Right lobe of liver (tissue), 6 donors: ENCODE measurements at regions of chr9 and their contacts with region 1.

Region 1: DNA sequence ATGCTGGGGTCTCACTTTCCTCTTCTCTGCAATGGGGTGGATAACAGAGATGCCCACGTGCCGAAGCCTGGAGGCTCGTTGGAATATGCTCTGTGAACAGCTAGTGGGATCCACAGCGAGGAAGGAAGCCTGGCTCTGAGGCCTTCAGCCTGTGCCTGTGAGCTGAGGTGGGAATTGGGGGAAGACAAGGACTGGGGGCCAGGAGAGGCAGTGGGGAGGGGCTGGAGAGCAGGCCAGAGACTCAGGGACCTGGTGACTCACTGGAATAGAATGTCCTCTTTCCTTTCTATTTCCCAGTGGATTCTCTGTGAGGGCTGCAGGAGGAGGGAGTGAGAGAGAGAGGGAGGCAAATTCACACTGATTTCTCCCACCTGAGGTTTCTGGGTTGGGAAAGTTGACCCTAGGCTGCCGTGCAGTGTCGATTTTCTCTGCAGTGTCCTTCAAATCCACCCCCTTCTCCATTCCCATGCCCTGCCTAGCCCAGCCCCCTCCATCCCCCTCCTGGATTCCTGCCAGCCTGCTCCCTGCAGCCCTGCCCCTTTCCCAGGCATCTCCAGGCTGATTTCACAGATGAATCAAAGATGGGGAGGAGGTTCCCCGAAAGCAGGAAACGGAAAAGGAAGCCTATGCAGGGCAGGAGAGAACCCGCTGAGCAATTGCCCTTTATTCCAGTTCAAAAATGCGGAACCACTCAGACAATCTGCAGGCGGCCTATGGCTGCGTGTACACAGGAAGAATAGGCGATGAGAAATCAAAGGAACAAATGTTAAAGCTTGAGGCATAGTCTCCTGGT is 1.4 kb upstream of the SPAAR start:
- DNase-seq: peak in 1 of 3 donors; percentile 63
- ATAC-seq: peak; percentile 12 to 63 (median 35)
- H3K4me3 ChIP-seq: no peak overlapping the region
- H3K27ac ChIP-seq: peak overlapping the region; percentile 53 to 69 (median 62)
- H3K4me1 ChIP-seq: peaks cover 0 to 55% (median 18%) of the 10 kb centered on the region in 4 donors
- H3K27me3 ChIP-seq: no peaks in the 10 kb centered on the region
- CTCF ChIP-seq: no peak
- POLR2A ChIP-seq: no peak

Region 2: GRCh38 chr9:35664531-35665470 is 243.1 kb before region 1 on chr9 and contains the start of gene ARHGEF39:
- intact Hi-C with region 1: no loop called
- DNase-seq: peak; percentile 85 to 87 (median 85)
- ATAC-seq: peak; percentile 82 to 88 (median 87)
- H3K4me3 ChIP-seq: peak within 1 kb of the TSS; percentile 18 to 58 (median 48)
- H3K27ac ChIP-seq: peak within 1 kb of the TSS in 1 of 3 donors; percentile 26
- H3K4me1 ChIP-seq: peaks cover 0 to 38% (median 7%) of the 10 kb centered on the region in 4 donors
- H3K27me3 ChIP-seq: no peaks in the 10 kb centered on the region
- CTCF ChIP-seq: peak in 2 of 4 donors; percentile 18 to 25
- POLR2A ChIP-seq: peak; percentile 49
- total RNA-seq, gene ARHGEF39: 0.11 to 3.6 (median 0.43) TPM

Region 3: DNA sequence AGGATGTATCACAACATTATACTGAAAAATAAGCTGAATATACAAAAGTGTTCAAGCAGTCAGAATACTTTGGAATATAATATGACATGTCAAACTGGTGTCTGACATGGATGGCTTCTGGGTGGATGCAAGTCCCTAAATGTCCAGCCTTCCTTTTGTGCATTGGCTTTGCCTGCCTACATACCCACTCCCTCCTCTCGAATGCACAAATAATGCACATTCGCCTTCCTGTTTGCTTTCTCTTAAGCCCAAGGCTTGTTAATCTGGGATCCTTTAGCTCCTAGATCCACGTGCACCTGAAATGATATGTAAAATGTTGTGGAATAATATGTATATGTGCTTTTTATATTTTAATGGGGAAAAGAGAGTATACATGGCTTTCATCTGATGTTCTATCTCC is 129.4 kb before region 1 on chr9:
- intact Hi-C with region 1: no loop called
- DNase-seq: no peak
- ATAC-seq: no peak
- H3K4me3 ChIP-seq: no peak overlapping the region
- H3K27ac ChIP-seq: no peak overlapping the region
- H3K4me1 ChIP-seq: peaks cover 0 to 14% (median 0%) of the 10 kb centered on the region in 4 donors
- H3K27me3 ChIP-seq: no peaks in the 10 kb centered on the region
- CTCF ChIP-seq: no peak
- POLR2A ChIP-seq: no peak

Region 4: DNA sequence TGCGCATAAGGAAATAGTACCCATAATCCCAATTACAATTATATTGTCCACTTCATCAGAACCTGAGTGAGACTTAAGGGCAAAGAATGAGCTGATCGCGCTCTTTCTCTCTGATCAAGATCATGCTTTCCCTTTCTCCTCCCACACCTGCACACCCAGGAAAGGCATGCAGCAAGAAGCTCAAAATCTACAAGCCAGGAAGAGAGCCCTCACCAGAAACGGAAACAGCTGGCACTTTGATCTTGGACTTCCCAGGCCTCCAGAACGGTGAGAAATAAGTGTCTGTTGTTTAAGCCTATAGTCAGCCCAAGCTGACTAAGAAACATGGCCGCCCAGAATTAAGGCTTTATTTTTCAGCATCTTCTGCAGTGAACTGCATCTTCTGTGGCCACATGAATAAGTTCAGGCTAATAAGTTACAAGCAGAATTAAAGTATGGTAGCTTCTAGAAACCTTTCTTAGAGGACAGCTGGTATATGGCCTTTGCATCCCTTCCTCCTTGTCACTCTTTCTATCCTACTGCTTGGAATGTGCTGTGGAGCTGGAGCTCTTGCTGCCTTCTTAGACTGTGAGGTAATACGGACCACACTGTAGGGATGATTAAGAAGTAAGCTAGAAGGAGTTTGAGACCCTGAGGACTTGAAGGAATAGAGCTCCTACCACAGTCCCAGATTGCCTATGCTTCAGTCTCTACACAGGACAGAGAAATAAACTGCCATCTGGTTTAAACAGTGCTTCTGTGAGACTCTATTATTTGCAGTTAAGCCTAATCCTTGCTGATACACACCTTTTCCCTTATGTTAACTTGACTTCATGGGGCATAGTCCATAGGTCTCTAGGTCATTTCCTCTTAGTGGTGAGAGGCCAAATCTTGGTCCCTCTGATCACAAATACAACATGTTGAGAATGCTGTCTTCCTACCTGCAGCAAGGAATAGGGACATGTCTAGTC is 32.8 kb after region 1 on chr9:
- intact Hi-C with region 1: loop called in 1 of 2 experiments (anchors 5 kb)
- DNase-seq: no peak
- ATAC-seq: peak in 3 of 4 donors; percentile 50 to 71 (median 70)
- H3K4me3 ChIP-seq: no peak overlapping the region
- H3K27ac ChIP-seq: peak overlapping the region in 1 of 3 donors; percentile 13
- H3K4me1 ChIP-seq: peaks cover 0 to 10% (median 2%) of the 10 kb centered on the region in 4 donors
- H3K27me3 ChIP-seq: no peaks in the 10 kb centered on the region
- CTCF ChIP-seq: no peak
- POLR2A ChIP-seq: no peak